Activated B cell treated with CpG ODN at 0.5 μM for 24 hours (primary cell): ENCODE measurements at regions of chr3 and their contacts with region 1.

Region 1: DNA sequence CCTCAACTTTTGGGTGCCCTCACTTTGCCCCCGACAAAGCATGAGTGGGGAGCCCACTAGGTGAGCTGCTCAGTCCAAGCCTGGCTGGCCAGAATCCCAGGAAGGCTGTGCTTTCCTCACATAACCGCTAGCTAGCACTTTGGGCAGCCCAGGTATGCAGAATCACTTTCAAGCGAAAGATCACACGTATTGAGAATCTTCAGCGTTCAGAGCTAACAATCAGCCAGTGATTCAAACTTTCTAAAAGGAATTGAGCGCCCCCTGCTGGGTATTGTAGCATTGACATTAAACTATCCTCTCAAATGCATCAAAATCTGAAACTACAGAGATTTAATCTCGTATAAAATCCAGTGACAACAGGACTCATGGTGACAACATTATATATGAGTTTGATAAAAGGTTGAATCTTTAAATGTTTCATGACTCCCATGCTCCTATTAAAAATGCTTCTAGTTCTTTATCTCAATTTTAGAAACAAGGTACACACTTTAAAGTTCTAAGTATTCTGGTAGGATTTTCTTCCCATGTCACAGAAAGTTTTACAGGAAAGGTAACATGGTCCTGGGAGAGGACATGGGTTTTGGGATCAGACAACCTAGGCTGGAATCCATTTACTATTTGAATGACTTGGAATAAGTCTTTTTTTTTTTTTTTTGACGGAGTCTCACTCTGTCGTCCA is 11.8 kb downstream of the ANAPC13 start:
- DNase-seq: peak; percentile 32
- ATAC-seq: peak; percentile 54
- H3K4me3 Mint-ChIP-seq: no peak overlapping the region
- H3K27ac Mint-ChIP-seq: no peak overlapping the region
- H3K4me1 Mint-ChIP-seq: peaks cover 2% of the 10 kb centered on the region
- H3K27me3 Mint-ChIP-seq: no peaks in the 10 kb centered on the region
- CTCF ChIP-seq: peak; percentile 39

Region 2: DNA sequence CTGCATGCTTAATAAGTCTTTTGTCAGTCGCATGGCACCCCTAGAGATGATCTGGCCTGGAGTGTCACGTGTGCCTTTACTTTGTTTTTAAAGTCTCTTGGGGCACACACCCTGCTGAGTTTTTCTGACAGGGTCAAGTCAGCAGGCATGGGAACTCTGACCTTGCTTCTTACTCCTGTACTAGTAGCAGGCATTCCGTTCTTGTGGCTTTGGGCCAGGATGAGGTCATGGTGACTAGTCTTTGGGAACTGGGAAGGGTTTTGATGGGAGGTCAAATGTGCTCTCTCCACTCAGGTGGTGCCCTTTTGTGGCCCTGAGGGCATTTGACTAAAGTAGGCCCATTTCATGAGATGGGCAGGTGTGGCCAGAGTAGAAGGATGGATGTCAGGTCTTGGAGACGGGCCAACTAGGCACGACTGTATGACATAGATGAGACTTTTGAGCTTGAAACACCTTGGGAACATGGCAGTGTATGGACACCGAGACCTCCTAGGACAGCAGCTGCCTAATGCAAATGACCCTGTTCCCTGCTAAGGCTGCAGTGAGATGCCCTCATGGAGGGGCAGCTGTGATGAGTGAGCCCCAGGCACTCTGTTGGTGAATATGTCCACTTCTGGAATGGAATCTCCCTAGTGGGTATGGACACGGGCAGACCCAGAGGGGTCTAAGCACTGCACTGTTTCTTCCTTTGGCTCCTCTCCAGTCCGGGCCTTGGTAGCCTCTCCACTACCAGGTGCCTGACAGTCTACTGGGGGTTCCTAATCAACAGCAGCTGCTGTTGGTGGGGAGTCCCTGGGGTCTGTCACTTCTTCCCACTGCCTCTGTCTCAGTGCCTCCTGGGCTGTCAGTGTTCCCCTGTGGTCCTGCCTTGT is 652.0 kb before region 1 on chr3:
- CTCF ChIA-PET with region 1: no interaction called
- POLR2A ChIA-PET with region 1: no interaction called
- intact Hi-C with region 1: loop called (anchors 1 kb)
- DNase-seq: no peak
- ATAC-seq: no peak
- H3K4me3 Mint-ChIP-seq: no peak overlapping the region
- H3K27ac Mint-ChIP-seq: no peak overlapping the region
- H3K4me1 Mint-ChIP-seq: no peaks in the 10 kb centered on the region
- H3K27me3 Mint-ChIP-seq: no peaks in the 10 kb centered on the region
- CTCF ChIP-seq: no peak

Region 3: GRCh38 chr3:134197681-134198261 is 276.2 kb before region 1 on chr3:
- CTCF ChIA-PET with region 1: interaction called, 44 read pairs
- POLR2A ChIA-PET with region 1: no interaction called
- intact Hi-C with region 1: loop called (anchors 1 kb)
- DNase-seq: no peak
- ATAC-seq: peak; percentile 68
- H3K4me3 Mint-ChIP-seq: no peak overlapping the region
- H3K27ac Mint-ChIP-seq: no peak overlapping the region
- H3K4me1 Mint-ChIP-seq: no peaks in the 10 kb centered on the region
- H3K27me3 Mint-ChIP-seq: no peaks in the 10 kb centered on the region
- CTCF ChIP-seq: no peak